ENCODE measurements at regions of chr1 and their contacts with region 1.

Region 1: DNA sequence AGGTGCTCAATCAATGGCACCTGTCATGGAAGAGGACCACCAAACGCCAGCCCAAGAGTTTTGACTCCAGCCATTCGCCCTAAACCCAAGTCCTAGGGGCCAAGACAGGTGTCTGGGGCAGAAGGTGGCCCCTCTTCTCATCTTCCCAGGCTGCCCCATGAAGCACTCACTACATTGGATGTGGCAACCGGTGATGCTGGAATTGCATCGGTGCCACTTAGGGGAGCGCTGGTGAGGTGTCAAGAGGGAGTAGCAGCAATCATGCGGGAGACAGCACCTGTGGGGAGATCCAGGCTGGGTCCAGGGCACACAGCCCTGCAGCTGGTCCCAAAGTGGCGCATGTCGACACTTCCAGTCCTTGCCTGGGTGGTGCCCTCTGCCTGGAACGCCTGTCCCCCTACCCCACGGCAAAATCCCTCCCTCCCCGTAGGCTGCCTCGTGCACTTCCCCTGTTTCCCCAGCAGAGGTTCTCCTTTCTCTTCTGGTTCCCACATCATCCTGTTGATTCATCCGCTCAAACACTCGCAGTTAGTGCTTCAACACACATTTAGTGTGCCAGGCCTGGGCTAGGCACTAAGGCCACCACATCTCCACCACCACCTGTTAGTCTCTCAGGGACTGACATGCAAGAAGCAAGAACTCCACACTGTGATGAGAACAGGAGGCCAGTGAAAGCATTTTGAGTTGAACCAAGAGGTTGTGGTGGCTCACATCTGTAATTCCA is 18.5 kb downstream of the PLA2G2D start:
- DNase-seq: peak in 2 of 3 donors; percentile 13 to 32
- H3K4me3 ChIP-seq: no peak overlapping the region
- H3K4me3 Mint-ChIP-seq: no peak overlapping the region
- H3K27ac ChIP-seq: no peak overlapping the region
- H3K27ac Mint-ChIP-seq: no peak overlapping the region
- H3K4me1 ChIP-seq: peaks cover 5 to 7% of the 10 kb centered on the region in 2 donors
- H3K4me1 Mint-ChIP-seq: peaks cover 6% of the 10 kb centered on the region
- H3K27me3 ChIP-seq: no peaks in the 10 kb centered on the region
- H3K27me3 Mint-ChIP-seq: peaks cover 2 to 10% (median 4%) of the 10 kb centered on the region in 3 donors
- CTCF ChIP-seq: peak; percentile 58

Region 2: GRCh38 chr1:20151906-20152598 is 51.3 kb after region 1 on chr1:
- intact Hi-C with region 1: loop called (anchors 2 to 5 kb)
- DNase-seq: peak; percentile 58 to 70 (median 64)
- H3K4me3 ChIP-seq: peak overlapping the region in 2 of 3 experiments; percentile 11 to 57
- H3K4me3 Mint-ChIP-seq: peak overlapping the region; percentile 63 to 75
- H3K27ac ChIP-seq: no peak overlapping the region
- H3K27ac Mint-ChIP-seq: peak overlapping the region; percentile 75 to 97 (median 95)
- H3K4me1 ChIP-seq: peaks cover 30 to 33% of the 10 kb centered on the region in 2 donors
- H3K4me1 Mint-ChIP-seq: peaks cover 28% of the 10 kb centered on the region
- H3K27me3 ChIP-seq: peaks cover 0 to 5% of the 10 kb centered on the region in 2 donors
- H3K27me3 Mint-ChIP-seq: peaks cover 7 to 17% (median 8%) of the 10 kb centered on the region in 3 donors
- CTCF ChIP-seq: peak; percentile 96

Region 3: GRCh38 chr1:20194757-20195461 is 94.1 kb after region 1 on chr1:
- intact Hi-C with region 1: loop called (anchors 5 kb)
- DNase-seq: peak; percentile 11 to 32 (median 18)
- H3K4me3 ChIP-seq: no peak overlapping the region
- H3K4me3 Mint-ChIP-seq: peak overlapping the region in 1 of 2 donors; percentile 9
- H3K27ac ChIP-seq: no peak overlapping the region
- H3K27ac Mint-ChIP-seq: no peak overlapping the region
- H3K4me1 ChIP-seq: no peaks in the 10 kb centered on the region
- H3K4me1 Mint-ChIP-seq: peaks cover 3% of the 10 kb centered on the region
- H3K27me3 ChIP-seq: peaks cover 3 to 5% of the 10 kb centered on the region in 2 donors
- H3K27me3 Mint-ChIP-seq: peaks cover 21 to 36% (median 33%) of the 10 kb centered on the region in 3 donors
- CTCF ChIP-seq: peak; percentile 76